ENCODE measurements at regions of chr6 and their contacts with region 1.

Region 1: DNA sequence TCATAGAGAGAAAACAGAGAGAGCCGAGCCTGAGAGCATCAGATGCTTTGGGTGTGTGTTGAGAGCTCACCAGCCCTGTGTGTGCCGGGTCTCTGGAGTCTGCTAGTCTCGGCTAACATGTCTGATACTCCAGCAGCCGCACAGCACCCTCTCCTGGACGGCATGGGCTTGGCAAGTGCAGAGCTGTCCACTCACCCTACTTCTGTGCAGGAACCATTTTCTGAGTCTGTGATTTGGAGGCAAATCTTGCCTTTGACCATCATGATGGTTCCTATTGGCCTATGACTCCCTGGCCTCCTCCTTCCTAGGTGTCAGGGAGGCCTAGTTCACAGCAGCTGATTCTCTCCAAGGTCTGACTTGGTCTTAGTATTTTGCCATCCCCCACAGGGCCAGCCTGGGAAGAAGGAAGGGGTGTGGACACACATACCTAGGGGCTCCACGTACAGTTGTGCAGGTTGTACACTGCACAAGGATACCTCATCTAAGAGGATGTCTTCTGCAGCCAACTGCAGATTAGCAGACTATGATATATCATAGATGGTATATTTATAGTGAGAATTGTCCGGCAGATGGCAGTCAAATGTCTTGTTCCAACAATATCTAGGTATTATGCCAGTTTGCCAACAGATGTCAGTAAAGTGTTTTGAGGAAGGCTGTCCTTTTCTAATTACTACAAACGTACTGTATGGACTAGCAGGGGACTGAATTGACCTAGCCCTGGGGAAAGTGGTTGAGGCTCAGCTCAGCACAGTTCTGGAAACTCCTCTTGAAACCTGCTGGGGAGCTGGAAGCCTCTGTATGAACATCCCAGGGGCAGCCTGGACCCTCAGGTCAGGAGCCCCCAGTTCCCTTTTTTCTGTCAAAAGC is 13.0 kb downstream of the FGD2 start:
- DNase-seq: peak; percentile 92
- H3K4me3 ChIP-seq: no peak overlapping the region
- H3K27ac ChIP-seq: peak overlapping the region; percentile 30 to 45 (median 42)
- H3K4me1 ChIP-seq: peaks cover 0 to 19% (median 8%) of the 10 kb centered on the region in 4 donors
- H3K27me3 ChIP-seq: no peaks in the 10 kb centered on the region
- CTCF ChIP-seq: peak; percentile 83 to 93 (median 89)
- EP300 ChIP-seq: no peak
- POLR2A ChIP-seq: no peak

Region 2: GRCh38 chr6:36788768-36789167 is 229.7 kb before region 1 on chr6:
- in situ Hi-C with region 1: loop called in 1 of 4 experiments (anchors 25 kb)
- intact Hi-C with region 1: no loop called
- DNase-seq: no peak
- H3K4me3 ChIP-seq: no peak overlapping the region
- H3K27ac ChIP-seq: no peak overlapping the region
- H3K4me1 ChIP-seq: peaks cover 0 to 17% (median 2%) of the 10 kb centered on the region in 4 donors
- H3K27me3 ChIP-seq: peaks cover 5% of the 10 kb centered on the region
- CTCF ChIP-seq: no peak
- EP300 ChIP-seq: no peak
- POLR2A ChIP-seq: no peak

Region 3: GRCh38 chr6:36955671-36956445 is 62.6 kb before region 1 on chr6:
- in situ Hi-C with region 1: no loop called
- intact Hi-C with region 1: no loop called
- DNase-seq: no peak
- H3K4me3 ChIP-seq: no peak overlapping the region
- H3K27ac ChIP-seq: no peak overlapping the region
- H3K4me1 ChIP-seq: no peaks in the 10 kb centered on the region
- H3K27me3 ChIP-seq: no peaks in the 10 kb centered on the region
- CTCF ChIP-seq: no peak
- EP300 ChIP-seq: no peak
- POLR2A ChIP-seq: no peak

Region 4: GRCh38 chr6:36985808-36986703 is 32.4 kb before region 1 on chr6 and contains the start of gene MTCH1:
- in situ Hi-C with region 1: no loop called
- intact Hi-C with region 1: loop called (anchors 5 kb)
- DNase-seq: peak; percentile 90
- H3K4me3 ChIP-seq: peak within 1 kb of the TSS; percentile 68 to 99 (median 90)
- H3K27ac ChIP-seq: peak within 1 kb of the TSS; percentile 93 to 96 (median 94)
- H3K4me1 ChIP-seq: peaks cover 28 to 51% (median 38%) of the 10 kb centered on the region in 4 donors
- H3K27me3 ChIP-seq: no peaks in the 10 kb centered on the region
- CTCF ChIP-seq: no peak
- EP300 ChIP-seq: no peak
- POLR2A ChIP-seq: peak; percentile 78
- total RNA-seq, gene MTCH1: 123 to 190 (median 152) TPM

Region 5: GRCh38 chr6:37272834-37273566 is 254.6 kb after region 1 on chr6:
- in situ Hi-C with region 1: no loop called
- intact Hi-C with region 1: no loop called
- DNase-seq: no peak
- H3K4me3 ChIP-seq: no peak overlapping the region
- H3K27ac ChIP-seq: no peak overlapping the region
- H3K4me1 ChIP-seq: peaks cover 0 to 11% (median 9%) of the 10 kb centered on the region in 4 donors
- H3K27me3 ChIP-seq: no peaks in the 10 kb centered on the region
- CTCF ChIP-seq: no peak
- EP300 ChIP-seq: no peak
- POLR2A ChIP-seq: no peak

Measured in transverse colon (tissue), 4 donors.